ENCODE measurements at regions of chr5 and their contacts with region 1.

Region 1: GRCh38 chr5:36690041-36690961 is 83.9 kb downstream of the SLC1A3 start:
- DNase-seq: peak; percentile 77 to 90 (median 87)
- H3K4me3 ChIP-seq: peak overlapping the region; percentile 66 to 86 (median 72)
- H3K4me3 Mint-ChIP-seq: peak overlapping the region; percentile 91 to 96
- H3K27ac ChIP-seq: peak overlapping the region; percentile 72 to 93
- H3K27ac Mint-ChIP-seq: peak overlapping the region; percentile 86 to 97 (median 91)
- H3K4me1 ChIP-seq: peaks cover 54 to 66% of the 10 kb centered on the region in 2 donors
- H3K4me1 Mint-ChIP-seq: peaks cover 63% of the 10 kb centered on the region
- H3K27me3 ChIP-seq: no peaks in the 10 kb centered on the region
- H3K27me3 Mint-ChIP-seq: peaks cover 0 to 2% (median 1%) of the 10 kb centered on the region in 3 donors
- CTCF ChIP-seq: peak; percentile 97

Region 2: GRCh38 chr5:36241631-36242533 is 448.4 kb before region 1 on chr5 and contains the start of gene NADK2:
- intact Hi-C with region 1: loop called in 1 of 2 experiments (anchors 5 kb)
- DNase-seq: peak; percentile 92 to 94 (median 94)
- H3K4me3 ChIP-seq: peak within 1 kb of the TSS; percentile 59 to 89 (median 75)
- H3K4me3 Mint-ChIP-seq: peak within 1 kb of the TSS; percentile 89 to 95
- H3K27ac ChIP-seq: peak within 1 kb of the TSS; percentile 78 to 85
- H3K27ac Mint-ChIP-seq: peak within 1 kb of the TSS; percentile 82 to 96 (median 89)
- H3K4me1 ChIP-seq: peaks cover 13 to 26% of the 10 kb centered on the region in 2 donors
- H3K4me1 Mint-ChIP-seq: peaks cover 28% of the 10 kb centered on the region
- H3K27me3 ChIP-seq: no peaks in the 10 kb centered on the region
- H3K27me3 Mint-ChIP-seq: peaks cover 0 to 4% (median 2%) of the 10 kb centered on the region in 3 donors
- CTCF ChIP-seq: peak; percentile 68
- polyA plus RNA-seq, gene NADK2: 2.6 to 5.9 (median 3.3) TPM

Region 3: GRCh38 chr5:36269479-36270219 is 420.7 kb before region 1 on chr5:
- intact Hi-C with region 1: loop called (anchors 2 to 5 kb)
- DNase-seq: no peak
- H3K4me3 ChIP-seq: no peak overlapping the region
- H3K4me3 Mint-ChIP-seq: no peak overlapping the region
- H3K27ac ChIP-seq: no peak overlapping the region
- H3K27ac Mint-ChIP-seq: no peak overlapping the region
- H3K4me1 ChIP-seq: peaks cover 13 to 14% of the 10 kb centered on the region in 2 donors
- H3K4me1 Mint-ChIP-seq: peaks cover 17% of the 10 kb centered on the region
- H3K27me3 ChIP-seq: no peaks in the 10 kb centered on the region
- H3K27me3 Mint-ChIP-seq: peaks cover 0 to 1% (median 0%) of the 10 kb centered on the region in 3 donors
- CTCF ChIP-seq: no peak

Region 4: DNA sequence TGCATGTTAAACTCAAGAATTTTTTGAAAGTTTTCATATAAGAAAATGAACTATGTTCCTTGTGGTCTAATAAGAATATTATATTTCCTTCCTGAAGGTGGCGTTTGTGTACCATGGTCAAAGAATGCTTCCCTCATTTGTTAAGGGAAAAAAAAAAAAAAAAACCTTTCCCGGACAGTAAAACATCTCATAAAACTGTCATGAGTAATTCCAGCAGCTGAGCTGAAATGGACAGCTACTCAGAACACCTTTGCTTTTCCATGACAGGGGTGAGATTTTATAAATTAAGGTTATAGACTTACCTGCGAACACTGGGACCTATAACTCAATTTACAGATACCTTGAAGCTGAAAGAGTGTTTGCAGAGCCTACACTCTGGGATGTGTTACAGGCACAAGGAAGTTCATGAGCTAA is 275.4 kb before region 1 on chr5:
- intact Hi-C with region 1: loop called (anchors 2 to 5 kb)
- DNase-seq: peak; percentile 4 to 28 (median 17)
- H3K4me3 ChIP-seq: no peak overlapping the region
- H3K4me3 Mint-ChIP-seq: no peak overlapping the region
- H3K27ac ChIP-seq: no peak overlapping the region
- H3K27ac Mint-ChIP-seq: no peak overlapping the region
- H3K4me1 ChIP-seq: no peaks in the 10 kb centered on the region
- H3K4me1 Mint-ChIP-seq: peaks cover 16% of the 10 kb centered on the region
- H3K27me3 ChIP-seq: no peaks in the 10 kb centered on the region
- H3K27me3 Mint-ChIP-seq: peaks cover 0 to 2% (median 1%) of the 10 kb centered on the region in 3 donors
- CTCF ChIP-seq: peak; percentile 56

Region 5: DNA sequence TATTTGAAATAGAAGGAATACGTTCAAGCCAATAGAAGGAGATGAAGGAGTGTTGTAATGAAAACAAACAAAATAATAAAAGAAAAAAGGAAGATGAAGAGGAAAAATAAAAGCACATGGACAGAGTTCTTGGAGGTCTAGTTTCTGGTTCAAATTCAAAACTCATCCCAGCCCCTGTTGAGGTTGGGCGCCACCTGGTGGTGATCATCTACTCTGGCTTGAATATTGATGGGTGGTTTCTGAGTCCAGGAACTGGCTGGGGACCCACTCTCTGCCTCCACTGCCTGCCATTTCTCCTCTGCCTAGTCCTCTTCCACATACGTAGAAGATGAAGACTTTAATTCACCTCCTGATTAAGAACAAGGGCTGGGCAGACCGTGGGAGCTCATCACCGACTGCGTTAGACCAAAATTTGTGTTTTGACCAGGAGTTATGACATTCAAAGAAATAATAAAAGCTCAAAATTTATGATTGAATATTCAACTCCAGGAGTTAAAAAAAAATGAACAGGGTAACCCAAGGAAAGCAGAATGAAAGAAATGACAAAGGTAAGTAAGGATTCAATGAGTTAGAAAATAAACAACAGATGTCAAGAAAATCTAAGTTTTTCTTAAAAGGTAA is 182.9 kb before region 1 on chr5:
- intact Hi-C with region 1: loop called in 1 of 2 experiments (anchors 5 kb)
- DNase-seq: peak; percentile 46 to 64 (median 56)
- H3K4me3 ChIP-seq: no peak overlapping the region
- H3K4me3 Mint-ChIP-seq: no peak overlapping the region
- H3K27ac ChIP-seq: no peak overlapping the region
- H3K27ac Mint-ChIP-seq: no peak overlapping the region
- H3K4me1 ChIP-seq: no peaks in the 10 kb centered on the region
- H3K4me1 Mint-ChIP-seq: peaks cover 2% of the 10 kb centered on the region
- H3K27me3 ChIP-seq: no peaks in the 10 kb centered on the region
- H3K27me3 Mint-ChIP-seq: peaks cover 0 to 5% (median 2%) of the 10 kb centered on the region in 3 donors
- CTCF ChIP-seq: peak; percentile 87

Region 6: DNA sequence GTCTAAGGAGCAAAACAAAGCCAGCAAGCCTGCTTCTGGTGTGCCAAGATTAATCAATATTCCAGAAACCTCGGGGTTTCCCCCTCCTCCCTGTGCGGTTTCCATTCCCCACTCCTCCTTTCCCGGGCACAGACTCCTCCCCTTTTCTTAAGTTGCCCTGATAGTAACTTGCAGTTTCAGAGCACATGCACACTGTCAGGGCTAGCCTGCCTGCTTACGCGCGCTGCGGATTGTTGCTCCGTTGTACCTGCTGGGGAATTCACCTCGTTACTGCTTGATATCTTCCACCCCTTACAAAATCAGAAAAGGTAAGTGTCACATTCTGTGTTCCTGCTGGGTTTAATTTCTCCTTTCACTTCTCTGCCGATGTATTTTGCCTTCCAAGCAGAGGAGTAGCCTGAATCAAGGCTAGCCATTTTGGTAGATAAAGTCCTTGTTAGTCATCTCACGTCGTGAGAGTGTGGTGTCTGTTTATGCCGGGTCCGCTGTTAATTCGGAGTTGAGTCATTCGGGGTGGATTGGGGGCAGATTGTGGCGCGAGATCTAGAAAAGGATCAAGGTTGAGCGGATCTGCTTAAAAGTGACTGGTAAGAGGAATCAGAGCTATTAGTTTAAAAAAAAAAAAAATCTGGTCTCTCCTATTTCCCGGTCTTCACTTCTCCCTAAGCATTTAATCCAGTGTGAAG is 83.7 kb before region 1 on chr5 and contains the start of gene SLC1A3:
- intact Hi-C with region 1: loop called in 1 of 2 experiments (anchors 2 kb)
- DNase-seq: peak; percentile 56 to 75 (median 61)
- H3K4me3 ChIP-seq: peak within 1 kb of the TSS; percentile 68 to 99 (median 85)
- H3K4me3 Mint-ChIP-seq: peak within 1 kb of the TSS; percentile 94 to 97
- H3K27ac ChIP-seq: peak within 1 kb of the TSS; percentile 47 to 88
- H3K27ac Mint-ChIP-seq: peak within 1 kb of the TSS; percentile 83 to 94 (median 87)
- H3K4me1 ChIP-seq: peaks cover 22 to 34% of the 10 kb centered on the region in 2 donors
- H3K4me1 Mint-ChIP-seq: peaks cover 48% of the 10 kb centered on the region
- H3K27me3 ChIP-seq: no peaks in the 10 kb centered on the region
- H3K27me3 Mint-ChIP-seq: peaks cover 0 to 2% (median 0%) of the 10 kb centered on the region in 3 donors
- CTCF ChIP-seq: no peak
- polyA plus RNA-seq, gene SLC1A3: 1.2 to 3.3 (median 1.3) TPM

Region 7: DNA sequence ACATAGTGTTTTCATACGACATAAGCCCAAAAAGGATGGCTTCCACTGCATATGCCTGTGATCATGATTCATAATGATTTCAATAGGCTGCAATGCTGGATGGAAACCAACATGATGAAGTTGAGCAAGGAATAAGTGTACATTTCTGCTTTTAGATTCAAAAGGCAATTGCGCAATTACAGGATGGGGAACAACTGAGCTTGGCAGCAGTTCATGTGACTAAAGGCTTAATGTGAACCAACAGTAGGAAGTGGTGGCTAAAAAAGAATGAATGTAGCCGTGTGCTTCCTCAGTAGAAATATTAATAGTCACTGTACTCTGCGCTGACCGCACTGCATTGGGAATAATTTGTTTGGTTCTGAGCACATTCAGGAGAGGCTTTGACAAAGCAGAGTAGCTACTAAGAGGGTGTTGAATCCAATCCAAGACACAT is 32.7 kb before region 1 on chr5:
- intact Hi-C with region 1: loop called (anchors 2 to 5 kb)
- DNase-seq: peak; percentile 97 to 100 (median 99)
- H3K4me3 ChIP-seq: peak overlapping the region in 2 of 3 experiments; percentile 34 to 59
- H3K4me3 Mint-ChIP-seq: peak overlapping the region; percentile 2 to 69
- H3K27ac ChIP-seq: peak overlapping the region; percentile 62 to 89
- H3K27ac Mint-ChIP-seq: peak overlapping the region; percentile 85 to 96 (median 91)
- H3K4me1 ChIP-seq: peaks cover 41 to 48% of the 10 kb centered on the region in 2 donors
- H3K4me1 Mint-ChIP-seq: peaks cover 62% of the 10 kb centered on the region
- H3K27me3 ChIP-seq: no peaks in the 10 kb centered on the region
- H3K27me3 Mint-ChIP-seq: no peaks in the 10 kb centered on the region
- CTCF ChIP-seq: no peak

Region 8: GRCh38 chr5:36739751-36740221 is 49.5 kb after region 1 on chr5:
- intact Hi-C with region 1: no loop called
- DNase-seq: peak; percentile 66 to 83 (median 80)
- H3K4me3 ChIP-seq: no peak overlapping the region
- H3K4me3 Mint-ChIP-seq: no peak overlapping the region
- H3K27ac ChIP-seq: no peak overlapping the region
- H3K27ac Mint-ChIP-seq: no peak overlapping the region
- H3K4me1 ChIP-seq: peaks cover 8 to 9% of the 10 kb centered on the region in 2 donors
- H3K4me1 Mint-ChIP-seq: peaks cover 13% of the 10 kb centered on the region
- H3K27me3 ChIP-seq: peaks cover 4% of the 10 kb centered on the region in 2 donors
- H3K27me3 Mint-ChIP-seq: peaks cover 7 to 19% (median 10%) of the 10 kb centered on the region in 3 donors
- CTCF ChIP-seq: peak; percentile 89

Region 9: GRCh38 chr5:36751886-36752285 is 61.6 kb after region 1 on chr5:
- intact Hi-C with region 1: no loop called
- DNase-seq: no peak
- H3K4me3 ChIP-seq: no peak overlapping the region
- H3K4me3 Mint-ChIP-seq: no peak overlapping the region
- H3K27ac ChIP-seq: no peak overlapping the region
- H3K27ac Mint-ChIP-seq: no peak overlapping the region
- H3K4me1 ChIP-seq: no peaks in the 10 kb centered on the region
- H3K4me1 Mint-ChIP-seq: peaks cover 2% of the 10 kb centered on the region
- H3K27me3 ChIP-seq: peaks cover 0 to 2% of the 10 kb centered on the region in 2 donors
- H3K27me3 Mint-ChIP-seq: peaks cover 0 to 5% (median 2%) of the 10 kb centered on the region in 3 donors
- CTCF ChIP-seq: no peak

Measured in CD14-positive monocyte (primary cell).